ENCODE measurements at regions of chr1 and their contacts with region 1.

Region 1: DNA sequence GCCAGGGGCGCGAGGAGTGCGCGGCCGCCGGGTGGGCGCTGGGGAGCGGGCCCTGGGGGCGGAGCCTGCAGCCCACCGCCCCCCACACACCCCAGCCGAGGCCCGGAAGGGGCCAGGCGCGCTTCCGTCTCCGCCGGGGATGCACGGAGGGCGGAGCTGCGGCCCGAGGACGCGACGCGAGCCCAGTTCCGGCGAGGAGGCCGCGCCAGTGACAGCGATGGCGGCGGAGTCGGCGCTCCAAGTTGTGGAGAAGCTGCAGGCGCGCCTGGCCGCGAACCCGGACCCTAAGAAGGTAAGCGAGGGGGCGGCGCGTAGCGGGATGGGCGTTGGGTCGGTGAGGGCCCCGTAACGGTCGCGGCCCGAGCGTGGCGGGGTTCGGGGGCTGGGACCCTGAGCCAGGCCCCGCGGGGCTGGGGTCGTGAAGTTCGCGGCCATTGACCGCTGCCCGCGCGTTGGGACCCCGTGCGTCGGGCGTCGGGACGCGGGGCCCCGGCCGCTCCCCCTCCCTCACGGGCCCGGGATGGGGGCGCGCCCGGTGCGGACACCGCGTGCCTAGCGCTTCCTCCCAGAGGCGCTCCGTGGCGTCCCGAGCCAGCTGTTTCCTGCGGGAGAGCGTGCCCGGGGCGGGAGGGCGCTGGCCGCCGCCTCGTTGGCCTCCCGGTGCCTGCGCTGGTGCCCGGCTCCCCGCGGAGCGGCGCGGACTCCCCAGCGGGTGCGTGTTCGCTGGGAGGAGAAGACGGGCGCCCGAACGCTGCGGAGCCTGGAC is at the start of gene ELOA:
- DNase-seq: peak; percentile 61
- H3K4me3 ChIP-seq: peak within 1 kb of the TSS; percentile 60 to 93 (median 84)
- H3K27ac ChIP-seq: peak within 1 kb of the TSS; percentile 63
- H3K4me1 ChIP-seq: peaks cover 16% of the 10 kb centered on the region
- H3K27me3 ChIP-seq: no peaks in the 10 kb centered on the region
- CTCF ChIP-seq: no peak
- total RNA-seq, gene ELOA: 38.0 to 59.9 TPM

Region 2: DNA sequence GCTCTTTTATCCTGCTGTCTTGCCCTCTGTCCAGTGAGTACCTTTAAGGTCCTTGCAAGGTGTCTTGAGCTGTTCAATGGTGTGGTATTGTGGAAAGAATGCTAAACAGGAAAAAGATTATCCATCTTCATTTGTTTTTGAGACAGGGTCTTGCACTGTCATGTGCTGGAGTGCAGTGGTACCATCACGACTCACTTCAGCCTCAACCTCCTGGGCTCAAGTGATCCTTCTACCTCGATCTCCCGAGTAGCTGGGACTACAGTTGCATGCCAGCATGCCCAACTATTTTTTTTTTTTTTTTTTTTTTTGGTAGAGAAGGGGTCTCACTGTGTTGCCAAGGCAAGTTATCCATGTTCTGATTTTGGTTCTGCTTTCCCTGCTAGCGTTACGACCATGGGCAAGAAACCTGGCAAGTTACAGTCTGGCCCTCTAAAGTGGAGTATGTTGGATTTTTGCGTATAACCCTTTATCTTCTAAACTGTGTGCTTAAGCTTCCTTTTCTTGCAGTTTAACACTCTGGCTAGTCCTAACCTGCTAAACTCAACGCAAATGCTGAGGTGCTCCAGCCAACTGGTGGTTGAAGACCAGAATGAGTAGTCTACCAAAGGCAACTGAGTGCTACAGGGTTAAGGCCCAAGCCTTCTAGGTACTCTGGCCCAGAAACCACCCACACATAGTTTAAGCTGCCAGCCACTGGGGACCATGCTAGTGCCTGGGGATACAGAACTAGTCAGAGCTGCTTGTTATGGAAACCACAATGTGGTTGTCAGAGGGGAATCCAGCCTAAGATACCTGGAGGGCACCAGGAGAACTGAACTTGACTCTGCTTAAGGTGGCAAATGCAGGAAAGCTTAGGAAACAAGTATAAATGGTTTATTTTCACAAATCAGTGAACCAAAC is 43.9 kb before region 1 on chr1:
- CTCF ChIA-PET with region 1: no interaction called
- dilution Hi-C with region 1: no loop called
- in situ Hi-C with region 1: no loop called
- intact Hi-C with region 1: loop called (anchors 2 kb)
- DNase-seq: peak; percentile 74
- H3K4me3 ChIP-seq: no peak overlapping the region
- H3K27ac ChIP-seq: no peak overlapping the region
- H3K4me1 ChIP-seq: peaks cover 34% of the 10 kb centered on the region
- H3K27me3 ChIP-seq: no peaks in the 10 kb centered on the region
- CTCF ChIP-seq: no peak

Region 3: GRCh38 chr1:23777979-23778814 is 34.7 kb after region 1 on chr1 and contains the start of gene PITHD1:
- CTCF ChIA-PET with region 1: no interaction called
- dilution Hi-C with region 1: no loop called
- in situ Hi-C with region 1: no loop called
- intact Hi-C with region 1: no loop called
- DNase-seq: peak; percentile 81
- H3K4me3 ChIP-seq: peak within 1 kb of the TSS; percentile 57 to 82 (median 75)
- H3K27ac ChIP-seq: peak within 1 kb of the TSS; percentile 86
- H3K4me1 ChIP-seq: peaks cover 20% of the 10 kb centered on the region
- H3K27me3 ChIP-seq: no peaks in the 10 kb centered on the region
- CTCF ChIP-seq: no peak
- total RNA-seq, gene PITHD1: 39.7 to 44.0 TPM

Measured in mammary epithelial cell (primary cell).